CD4-positive, alpha-beta T cell (primary cell): ENCODE measurements at regions of chr12 and their contacts with region 1.

Region 1: GRCh38 chr12:65232476-65233077 is 45.9 kb upstream of the MSRB3 start:
- DNase-seq: peak in 3 of 14 experiments; percentile 39 to 47 (median 42)
- ATAC-seq: peak; percentile 54
- H3K4me3 ChIP-seq: no peak overlapping the region
- H3K4me3 Mint-ChIP-seq: no peak overlapping the region
- H3K27ac ChIP-seq: no peak overlapping the region
- H3K27ac Mint-ChIP-seq: peak overlapping the region; percentile 35
- H3K4me1 ChIP-seq: no peaks in the 10 kb centered on the region
- H3K4me1 Mint-ChIP-seq: peaks cover 10% of the 10 kb centered on the region
- H3K27me3 ChIP-seq: no peaks in the 10 kb centered on the region
- H3K27me3 Mint-ChIP-seq: no peaks in the 10 kb centered on the region
- CTCF ChIP-seq: peak; percentile 74

Region 2: DNA sequence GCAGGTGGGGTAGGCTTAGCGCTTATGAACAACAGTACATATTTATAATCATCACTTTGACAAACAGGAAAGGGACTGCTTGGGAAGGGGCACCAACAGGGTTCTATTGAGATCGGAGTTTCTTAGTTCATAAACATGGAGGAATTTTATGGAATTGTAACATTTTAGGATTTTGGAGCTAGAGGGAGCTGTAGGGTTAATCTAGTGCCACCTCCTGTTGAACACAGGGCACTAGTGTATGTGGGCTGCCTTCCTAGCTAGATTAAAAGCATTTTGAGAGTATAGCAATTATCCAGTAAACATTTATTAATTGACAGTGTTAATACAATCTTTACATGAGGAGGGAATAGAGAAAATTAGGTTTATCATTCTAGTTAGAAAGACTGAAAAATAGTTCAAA is 431.2 kb before region 1 on chr12:
- CTCF ChIA-PET with region 1: no interaction called
- POLR2A ChIA-PET with region 1: no interaction called
- intact Hi-C with region 1: loop called (anchors 5 to 10 kb)
- DNase-seq: no peak
- ATAC-seq: no peak
- H3K4me3 ChIP-seq: no peak overlapping the region
- H3K4me3 Mint-ChIP-seq: no peak overlapping the region
- H3K27ac ChIP-seq: no peak overlapping the region
- H3K27ac Mint-ChIP-seq: no peak overlapping the region
- H3K4me1 ChIP-seq: peaks cover 3% of the 10 kb centered on the region
- H3K4me1 Mint-ChIP-seq: no peaks in the 10 kb centered on the region
- H3K27me3 ChIP-seq: peaks cover 9 to 18% of the 10 kb centered on the region in 2 experiments
- H3K27me3 Mint-ChIP-seq: peaks cover 42% of the 10 kb centered on the region
- CTCF ChIP-seq: no peak

Region 3: GRCh38 chr12:65252515-65252914 is 19.9 kb after region 1 on chr12:
- CTCF ChIA-PET with region 1: no interaction called
- POLR2A ChIA-PET with region 1: no interaction called
- intact Hi-C with region 1: no loop called
- DNase-seq: no peak
- ATAC-seq: no peak
- H3K4me3 ChIP-seq: no peak overlapping the region
- H3K4me3 Mint-ChIP-seq: no peak overlapping the region
- H3K27ac ChIP-seq: no peak overlapping the region
- H3K27ac Mint-ChIP-seq: no peak overlapping the region
- H3K4me1 ChIP-seq: no peaks in the 10 kb centered on the region
- H3K4me1 Mint-ChIP-seq: no peaks in the 10 kb centered on the region
- H3K27me3 ChIP-seq: no peaks in the 10 kb centered on the region
- H3K27me3 Mint-ChIP-seq: no peaks in the 10 kb centered on the region
- CTCF ChIP-seq: no peak

Region 4: DNA sequence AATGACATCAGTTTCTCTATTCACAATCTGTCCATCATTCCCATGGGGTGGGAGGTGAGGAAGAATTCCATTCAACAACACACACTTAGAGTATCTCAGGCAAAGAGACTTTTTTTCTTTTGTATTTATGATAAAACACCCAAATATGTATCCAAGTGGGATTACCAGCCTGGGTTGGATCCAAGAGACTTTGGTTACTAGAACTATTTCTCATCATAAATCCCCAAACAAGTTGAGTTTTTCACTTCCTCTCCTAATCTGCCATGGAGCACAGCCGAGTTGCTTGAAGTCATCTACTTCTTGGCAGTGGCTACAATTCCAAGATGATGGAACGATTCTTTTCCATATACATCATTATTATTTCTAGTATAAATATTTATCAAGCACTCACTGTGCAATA is 382.5 kb after region 1 on chr12:
- CTCF ChIA-PET with region 1: no interaction called
- POLR2A ChIA-PET with region 1: no interaction called
- intact Hi-C with region 1: no loop called
- DNase-seq: no peak
- ATAC-seq: no peak
- H3K4me3 ChIP-seq: no peak overlapping the region
- H3K4me3 Mint-ChIP-seq: no peak overlapping the region
- H3K27ac ChIP-seq: no peak overlapping the region
- H3K27ac Mint-ChIP-seq: no peak overlapping the region
- H3K4me1 ChIP-seq: no peaks in the 10 kb centered on the region
- H3K4me1 Mint-ChIP-seq: no peaks in the 10 kb centered on the region
- H3K27me3 ChIP-seq: no peaks in the 10 kb centered on the region
- H3K27me3 Mint-ChIP-seq: peaks cover 29% of the 10 kb centered on the region
- CTCF ChIP-seq: no peak